AG04449 (cell line): ENCODE measurements at regions of chr7 and their contacts with region 1.

Region 1: DNA sequence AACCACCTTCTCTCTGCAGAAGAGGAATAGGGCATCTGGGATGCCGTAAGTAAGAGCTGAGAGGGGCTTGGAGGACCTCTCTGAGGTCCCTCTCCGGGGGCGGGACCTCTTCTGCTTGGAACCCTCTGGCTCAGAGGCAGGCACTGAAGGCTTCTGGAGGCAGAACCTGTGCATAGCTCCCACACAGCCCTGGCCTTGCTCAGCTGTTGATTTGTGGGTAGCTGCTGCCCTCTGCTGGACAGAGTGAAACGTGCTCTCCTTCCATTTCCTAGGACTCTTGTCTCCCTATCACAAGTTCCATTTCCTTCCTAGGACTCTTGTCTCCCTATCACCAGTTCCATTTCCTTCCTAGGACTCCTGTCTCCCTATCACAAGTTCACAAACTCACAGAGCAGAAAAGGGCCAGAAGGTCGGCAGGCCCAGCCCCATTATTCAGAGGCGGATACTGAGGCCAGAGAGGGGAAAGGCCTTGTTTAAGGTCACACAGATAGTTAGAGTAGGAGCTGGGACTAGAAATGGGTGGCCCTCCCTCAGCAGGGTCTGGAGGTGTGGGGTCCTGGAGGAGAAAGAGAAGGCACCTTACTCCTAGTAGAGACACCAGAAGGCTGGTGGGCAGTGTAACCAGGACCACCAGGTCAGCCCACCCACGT is 30.3 kb upstream of the GARS1 start:
- DNase-seq: peak; percentile 36
- H3K4me3 ChIP-seq: no peak overlapping the region
- CTCF ChIP-seq: peak; percentile 88

Region 2: GRCh38 chr7:30019387-30019786 is 545.0 kb before region 1 on chr7:
- CTCF ChIA-PET with region 1: no interaction called
- POLR2A ChIA-PET with region 1: no interaction called
- DNase-seq: no peak
- H3K4me3 ChIP-seq: no peak overlapping the region
- CTCF ChIP-seq: no peak

Region 3: DNA sequence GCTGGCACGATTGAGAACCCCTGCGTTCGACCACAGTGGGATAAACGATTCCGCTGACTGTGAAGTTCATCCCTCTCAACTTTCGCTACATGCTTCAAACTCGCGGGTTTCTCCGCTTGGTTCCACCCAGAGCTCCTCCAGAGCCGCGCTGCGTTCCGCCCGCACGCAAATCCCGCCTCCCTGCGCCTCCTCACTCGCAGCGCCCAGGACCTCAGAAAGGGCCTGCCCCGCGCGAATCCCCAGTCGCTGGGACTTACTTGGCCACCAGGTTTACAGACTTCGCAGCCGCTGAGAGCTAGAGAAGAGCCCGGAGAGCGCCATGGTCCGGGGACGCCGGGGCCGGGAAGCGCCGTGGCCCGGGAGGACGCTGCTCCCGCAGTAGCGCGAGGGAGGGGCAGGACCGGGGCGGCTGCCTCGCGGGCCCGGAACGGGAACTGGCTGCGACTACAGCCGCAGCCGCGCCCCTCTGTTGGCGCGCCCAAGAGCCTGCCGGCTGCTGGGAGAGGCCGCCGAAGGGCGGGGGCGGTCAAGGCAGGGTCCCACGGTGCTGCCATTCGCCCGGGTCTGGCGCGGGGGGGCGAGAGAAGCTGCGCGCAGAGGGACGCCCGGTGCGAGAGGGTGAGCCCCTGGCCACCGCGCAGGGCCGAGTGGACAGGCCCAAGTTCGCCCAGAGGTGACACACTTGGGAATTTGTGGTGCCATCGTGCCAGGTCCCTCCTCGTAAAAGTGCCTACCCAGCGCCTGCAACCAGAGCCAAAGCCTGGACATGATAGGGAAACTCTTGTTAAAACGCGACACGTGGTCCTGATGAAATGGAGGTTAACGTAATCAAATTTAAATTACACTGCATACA is 85.8 kb before region 1 on chr7 and contains the start of gene NOD1:
- CTCF ChIA-PET with region 1: interaction called, 16 read pairs
- POLR2A ChIA-PET with region 1: no interaction called
- DNase-seq: no peak
- H3K4me3 ChIP-seq: peak within 1 kb of the TSS; percentile 74
- CTCF ChIP-seq: no peak

Region 4: GRCh38 chr7:30510124-30511075 is 54.0 kb before region 1 on chr7:
- CTCF ChIA-PET with region 1: interaction called, 132 read pairs
- POLR2A ChIA-PET with region 1: no interaction called
- DNase-seq: no peak
- H3K4me3 ChIP-seq: no peak overlapping the region
- CTCF ChIP-seq: peak; percentile 58

Region 5: DNA sequence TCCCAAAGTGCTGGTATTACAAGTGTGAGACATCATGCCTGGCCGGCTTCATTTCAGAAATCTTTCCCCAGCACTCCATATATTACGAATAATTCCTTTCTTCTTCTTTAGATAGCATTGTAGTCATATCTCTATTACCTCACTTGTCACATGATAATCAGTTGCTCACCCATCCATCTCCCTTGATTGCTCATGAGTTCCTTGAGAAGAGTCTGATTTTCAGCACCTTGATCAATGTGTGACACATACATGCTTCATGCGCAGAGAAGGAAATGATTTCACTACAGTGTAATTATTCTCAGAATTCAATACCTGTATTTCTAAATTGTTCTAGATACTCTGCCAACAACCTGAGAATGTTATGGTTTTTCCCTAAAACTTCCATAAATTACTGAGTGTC is 33.1 kb before region 1 on chr7:
- CTCF ChIA-PET with region 1: interaction called, 11 read pairs
- POLR2A ChIA-PET with region 1: no interaction called
- DNase-seq: no peak
- H3K4me3 ChIP-seq: no peak overlapping the region
- CTCF ChIP-seq: no peak

Region 6: GRCh38 chr7:30585675-30586074 is 21.3 kb after region 1 on chr7:
- CTCF ChIA-PET with region 1: interaction called, 61 read pairs
- POLR2A ChIA-PET with region 1: no interaction called
- DNase-seq: no peak
- H3K4me3 ChIP-seq: no peak overlapping the region
- CTCF ChIP-seq: no peak

Region 7: DNA sequence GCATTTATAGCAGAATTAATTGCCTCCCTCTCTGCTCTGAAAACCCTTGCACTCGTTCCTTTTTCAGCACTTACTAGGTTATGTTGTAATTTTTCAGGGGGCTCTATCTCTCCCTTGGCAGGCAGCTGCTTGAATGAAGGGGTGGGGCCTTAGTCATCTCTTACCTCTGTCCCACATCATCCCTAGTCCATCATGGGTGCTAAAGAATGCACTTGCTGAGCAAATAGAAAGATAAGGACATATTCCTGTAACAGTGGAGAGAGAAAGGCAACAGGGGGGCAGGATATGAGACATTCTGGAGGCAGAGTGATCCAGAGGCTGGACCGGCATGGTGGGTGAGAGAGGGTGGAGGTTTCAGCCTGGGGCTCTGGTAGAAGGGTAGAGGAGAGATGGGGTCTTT is 266.9 kb after region 1 on chr7:
- CTCF ChIA-PET with region 1: no interaction called
- POLR2A ChIA-PET with region 1: no interaction called
- DNase-seq: no peak
- H3K4me3 ChIP-seq: no peak overlapping the region
- CTCF ChIP-seq: no peak